ENCODE measurements at regions of chr2 and their contacts with region 1.

Region 1: DNA sequence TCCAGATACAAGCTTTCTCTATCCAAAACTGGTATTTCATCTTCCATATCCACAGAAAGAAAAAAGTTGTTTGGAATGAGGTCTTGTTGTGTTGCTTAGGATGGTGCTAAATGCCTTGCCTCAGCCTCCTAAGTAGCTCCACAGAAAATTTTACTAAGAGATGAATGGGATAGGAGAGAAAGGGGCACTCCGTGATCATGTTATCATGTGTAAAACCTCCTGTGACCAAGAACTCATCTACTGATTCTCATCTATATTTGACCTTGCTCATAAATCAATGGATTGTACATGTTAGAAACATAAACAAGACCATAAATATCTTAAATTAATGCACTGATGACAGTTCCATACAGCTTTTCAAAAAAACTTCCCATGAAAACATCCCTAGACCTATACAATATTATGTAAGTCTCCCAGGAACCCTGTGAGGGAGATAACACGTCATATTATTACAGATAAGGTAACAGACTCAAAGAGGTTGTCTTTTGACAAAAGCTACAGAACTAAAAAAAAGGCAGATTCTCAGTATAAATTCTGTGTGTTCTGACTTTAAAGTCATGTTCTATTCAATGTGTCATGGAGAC is 29.3 kb upstream of the KYNU start:
- DNase-seq: no peak
- ATAC-seq: no peak
- H3K4me3 ChIP-seq: no peak overlapping the region
- H3K27ac ChIP-seq: no peak overlapping the region
- H3K4me1 ChIP-seq: no peaks in the 10 kb centered on the region
- H3K27me3 ChIP-seq: no peaks in the 10 kb centered on the region
- CTCF ChIP-seq: no peak
- EP300 ChIP-seq: no peak
- POLR2A ChIP-seq: no peak
- RAD21 ChIP-seq: no peak

Region 2: GRCh38 chr2:142834021-142834420 is 14.1 kb before region 1 on chr2:
- CTCF ChIA-PET with region 1: interaction called, 3 read pairs
- POLR2A ChIA-PET with region 1: no interaction called
- RAD21 ChIA-PET with region 1: no interaction called
- SMC1A ChIA-PET with region 1: interaction called, 13 read pairs
- in situ Hi-C with region 1: no loop called
- intact Hi-C with region 1: no loop called
- DNase-seq: no peak
- ATAC-seq: no peak
- H3K4me3 ChIP-seq: no peak overlapping the region
- H3K27ac ChIP-seq: no peak overlapping the region
- H3K4me1 ChIP-seq: no peaks in the 10 kb centered on the region
- H3K27me3 ChIP-seq: no peaks in the 10 kb centered on the region
- CTCF ChIP-seq: no peak
- EP300 ChIP-seq: no peak
- POLR2A ChIP-seq: no peak
- RAD21 ChIP-seq: no peak